ENCODE measurements at regions of chr5 and their contacts with region 1.

Region 1: DNA sequence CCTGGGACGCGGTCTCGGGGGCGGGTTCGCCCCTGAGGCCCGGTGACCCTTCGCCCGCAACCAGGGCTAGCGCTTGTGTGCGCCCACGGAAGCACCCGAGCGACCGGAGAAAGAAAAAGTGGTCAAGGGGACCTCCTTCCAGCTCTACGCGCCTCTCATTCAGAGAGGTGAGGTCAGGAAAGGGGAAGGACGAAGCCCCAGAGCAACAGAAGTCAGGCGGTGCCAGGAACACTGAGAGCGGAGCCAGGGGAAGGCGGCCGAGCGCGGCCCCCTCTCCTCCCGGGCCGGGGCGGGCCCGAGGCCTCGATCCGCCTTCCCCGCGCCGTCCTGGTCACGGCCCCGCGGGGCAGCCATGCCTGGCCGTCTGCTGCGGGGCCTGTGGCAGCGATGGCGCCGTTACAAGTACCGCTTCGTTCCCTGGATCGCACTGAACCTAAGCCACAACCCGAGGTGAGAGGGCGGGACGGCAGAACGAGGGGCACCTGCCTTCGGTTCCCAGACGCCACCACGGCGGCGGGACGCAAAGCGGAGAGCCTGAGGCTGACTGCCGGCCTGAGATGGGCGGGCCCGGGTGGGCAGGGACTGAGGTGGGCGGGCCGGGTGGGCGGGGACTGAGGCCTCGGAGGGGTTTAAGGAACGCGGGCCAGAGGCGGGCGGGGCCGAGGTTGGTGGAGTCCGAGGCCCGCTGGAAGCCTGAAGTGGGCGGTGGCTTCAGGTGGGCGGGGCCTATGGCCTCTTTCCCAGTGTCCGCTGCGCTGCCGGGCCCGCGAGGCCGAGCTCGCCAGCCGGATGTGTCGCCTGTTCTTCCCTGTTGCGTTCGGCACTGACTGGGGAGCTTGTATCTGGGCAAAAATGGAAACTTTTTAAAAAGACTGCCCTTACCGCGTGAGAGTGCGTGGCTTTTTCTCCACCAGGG is at the start of gene SETD9:
- DNase-seq: peak; percentile 96
- total RNA-seq, gene SETD9: 16.0 and 43.8 TPM in 2 replicates

Region 2: GRCh38 chr5:56871777-56872176 is 37.8 kb before region 1 on chr5:
- in situ Hi-C with region 1: no loop called
- DNase-seq: no peak

Region 3: GRCh38 chr5:57267805-57268204 is 358.3 kb after region 1 on chr5:
- in situ Hi-C with region 1: loop called (anchors 25 kb)
- DNase-seq: no peak

Measured in G401 (cell line).